HAP-1 (cell line): ENCODE measurements at regions of chr12 and their contacts with region 1.

Region 1: GRCh38 chr12:47779301-47779942 is 6.4 kb downstream of the SLC48A1 start:
- DNase-seq: peak; percentile 70 to 94
- H3K4me3 ChIP-seq: no peak overlapping the region
- H3K4me1 ChIP-seq: peaks cover 12% of the 10 kb centered on the region
- H3K27me3 ChIP-seq: no peaks in the 10 kb centered on the region

Region 2: DNA sequence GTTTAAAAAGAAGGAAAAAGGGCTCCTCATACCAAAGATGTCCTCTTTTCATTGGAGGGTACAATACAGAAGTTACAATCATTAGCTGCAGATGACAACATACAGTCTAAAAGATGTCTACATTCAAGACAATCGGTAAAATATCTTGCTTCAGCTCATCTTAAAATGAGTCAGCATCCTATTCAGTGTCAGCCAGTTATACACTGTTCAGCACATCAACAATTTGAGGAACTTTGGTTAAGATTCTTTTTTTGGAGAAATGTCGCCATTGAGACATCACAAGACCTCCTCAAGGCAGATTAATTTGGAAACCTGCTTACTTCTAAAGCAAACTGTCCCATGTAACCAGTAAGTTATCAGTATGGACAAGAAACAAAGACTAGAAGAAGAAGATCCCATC is 852.9 kb before region 1 on chr12:
- in situ Hi-C with region 1: no loop called
- DNase-seq: no peak
- H3K4me3 ChIP-seq: no peak overlapping the region
- H3K4me1 ChIP-seq: no peaks in the 10 kb centered on the region
- H3K27me3 ChIP-seq: no peaks in the 10 kb centered on the region; the same call in 1 of the 2 replicates

Region 3: GRCh38 chr12:47651368-47652254 is 127.8 kb before region 1 on chr12:
- in situ Hi-C with region 1: loop called (anchors 10 kb)
- DNase-seq: peak; percentile 72 to 75
- H3K4me3 ChIP-seq: no peak overlapping the region
- H3K4me1 ChIP-seq: peaks cover 5% of the 10 kb centered on the region
- H3K27me3 ChIP-seq: no peaks in the 10 kb centered on the region